ENCODE measurements at regions of chr12 and their contacts with region 1.

Region 1: GRCh38 chr12:8681041-8681902 is 16.5 kb upstream of the RIMKLB start:
- DNase-seq: no peak
- H3K4me3 ChIP-seq: no peak overlapping the region
- H3K4me1 ChIP-seq: no peaks in the 10 kb centered on the region
- H3K27me3 ChIP-seq: no peaks in the 10 kb centered on the region

Region 2: GRCh38 chr12:8819676-8819980 is 138.4 kb after region 1 on chr12:
- in situ Hi-C with region 1: loop called (anchors 5 kb)
- DNase-seq: peak in 1 of 2 experiments; percentile 47
- H3K4me3 ChIP-seq: no peak overlapping the region
- H3K4me1 ChIP-seq: peaks cover 11% of the 10 kb centered on the region
- H3K27me3 ChIP-seq: no peaks in the 10 kb centered on the region

Region 3: GRCh38 chr12:9049520-9050133 is 368.4 kb after region 1 on chr12:
- in situ Hi-C with region 1: loop called (anchors 10 kb)
- DNase-seq: peak; percentile 41 to 44
- H3K4me3 ChIP-seq: no peak overlapping the region
- H3K4me1 ChIP-seq: no peaks in the 10 kb centered on the region
- H3K27me3 ChIP-seq: peaks cover 8% of the 10 kb centered on the region

Measured in HAP-1 (cell line).